CD8-positive, alpha-beta T cell (primary cell): ENCODE measurements at regions of chr9 and their contacts with region 1.

Region 1: DNA sequence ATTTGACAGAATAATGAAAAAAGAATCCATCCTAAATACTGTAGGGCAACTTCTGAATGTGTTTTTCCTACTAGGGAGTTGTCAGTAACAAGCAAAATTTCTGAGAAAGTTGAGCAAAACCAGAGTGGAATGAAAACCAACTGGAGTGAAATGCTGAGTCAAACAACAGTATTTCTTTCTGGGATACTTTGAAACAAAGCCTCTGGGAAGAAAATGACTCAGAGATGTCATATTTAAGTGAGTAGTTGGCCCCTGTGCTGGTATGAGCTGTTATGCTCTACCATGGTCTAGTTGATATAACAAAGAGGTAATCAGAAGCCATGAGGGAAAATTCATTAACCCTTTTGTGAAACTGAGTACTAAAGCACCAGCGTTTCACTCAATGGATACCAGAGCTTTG is 372.1 kb upstream of the C9orf72 start:
- DNase-seq: no peak
- ATAC-seq: no peak
- H3K4me3 ChIP-seq: no peak overlapping the region
- H3K4me3 Mint-ChIP-seq: no peak overlapping the region
- H3K27ac ChIP-seq: no peak overlapping the region
- H3K27ac Mint-ChIP-seq: no peak overlapping the region
- H3K4me1 ChIP-seq: no peaks in the 10 kb centered on the region
- H3K4me1 Mint-ChIP-seq: no peaks in the 10 kb centered on the region
- H3K27me3 ChIP-seq: no peaks in the 10 kb centered on the region
- H3K27me3 Mint-ChIP-seq: no peaks in the 10 kb centered on the region
- CTCF ChIP-seq: no peak

Region 2: DNA sequence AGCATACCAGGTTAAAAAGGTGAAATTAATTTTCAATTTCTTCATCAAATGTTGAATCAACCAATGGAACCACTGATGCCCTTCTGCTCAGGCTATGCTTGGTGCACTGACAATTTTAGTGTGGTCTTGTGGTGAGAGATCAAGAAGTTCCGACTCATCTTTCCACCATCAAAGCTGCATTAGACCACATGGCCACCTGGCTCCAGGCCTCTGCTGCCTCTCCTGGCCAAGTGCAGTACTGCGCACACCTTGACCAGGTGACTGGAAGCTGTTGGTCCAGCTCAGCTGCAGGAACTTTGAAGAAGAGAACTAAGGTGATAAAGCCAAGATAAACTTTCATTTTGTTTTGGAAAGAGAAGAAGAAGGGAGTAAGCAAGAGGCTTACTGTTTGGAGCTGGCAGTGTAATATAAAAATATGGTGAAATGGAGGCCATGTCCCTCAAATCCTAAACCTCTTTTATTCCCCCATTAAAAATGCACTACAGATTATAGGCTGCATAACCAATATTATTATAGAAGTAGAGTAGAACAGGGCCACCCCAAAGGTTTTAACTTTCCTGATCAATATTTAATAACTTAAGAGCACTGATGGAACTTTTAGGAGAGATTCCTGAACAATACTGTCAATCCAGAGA is 56.6 kb before region 1 on chr9:
- CTCF ChIA-PET with region 1: no interaction called
- POLR2A ChIA-PET with region 1: no interaction called
- intact Hi-C with region 1: loop called in 1 of 2 experiments (anchors 10 kb)
- DNase-seq: peak in 4 of 9 experiments; percentile 3 to 20 (median 10)
- ATAC-seq: no peak
- H3K4me3 ChIP-seq: no peak overlapping the region
- H3K4me3 Mint-ChIP-seq: no peak overlapping the region
- H3K27ac ChIP-seq: no peak overlapping the region
- H3K27ac Mint-ChIP-seq: no peak overlapping the region
- H3K4me1 ChIP-seq: no peaks in the 10 kb centered on the region
- H3K4me1 Mint-ChIP-seq: no peaks in the 10 kb centered on the region
- H3K27me3 ChIP-seq: no peaks in the 10 kb centered on the region
- H3K27me3 Mint-ChIP-seq: no peaks in the 10 kb centered on the region
- CTCF ChIP-seq: peak; percentile 45

Region 3: GRCh38 chr9:28092981-28093936 is 147.9 kb after region 1 on chr9:
- CTCF ChIA-PET with region 1: no interaction called
- POLR2A ChIA-PET with region 1: no interaction called
- intact Hi-C with region 1: no loop called
- DNase-seq: no peak
- ATAC-seq: no peak
- H3K4me3 ChIP-seq: no peak overlapping the region
- H3K4me3 Mint-ChIP-seq: no peak overlapping the region
- H3K27ac ChIP-seq: no peak overlapping the region
- H3K27ac Mint-ChIP-seq: no peak overlapping the region
- H3K4me1 ChIP-seq: no peaks in the 10 kb centered on the region
- H3K4me1 Mint-ChIP-seq: no peaks in the 10 kb centered on the region
- H3K27me3 ChIP-seq: no peaks in the 10 kb centered on the region
- H3K27me3 Mint-ChIP-seq: no peaks in the 10 kb centered on the region
- CTCF ChIP-seq: no peak